Naive thymus-derived CD4-positive, alpha-beta T cell (primary cell): ENCODE measurements at regions of chr17 and their contacts with region 1.

Region 1: GRCh38 chr17:40113110-40113906 is 8.5 kb upstream of the MSL1 start:
- DNase-seq: peak; percentile 69 to 95 (median 93)
- ATAC-seq: peak; percentile 89
- H3K4me3 ChIP-seq: peak overlapping the region; percentile 58
- H3K4me3 Mint-ChIP-seq: peak overlapping the region; percentile 75 to 98 (median 85)
- H3K27ac ChIP-seq: peak overlapping the region; percentile 69
- H3K27ac Mint-ChIP-seq: peak overlapping the region; percentile 57 to 100 (median 91)
- H3K4me1 ChIP-seq: peaks cover 52 to 55% of the 10 kb centered on the region in 2 donors
- H3K4me1 Mint-ChIP-seq: peaks cover 41 to 67% (median 56%) of the 10 kb centered on the region in 7 donors
- H3K27me3 ChIP-seq: no peaks in the 10 kb centered on the region
- H3K27me3 Mint-ChIP-seq: no peaks in the 10 kb centered on the region

Region 2: DNA sequence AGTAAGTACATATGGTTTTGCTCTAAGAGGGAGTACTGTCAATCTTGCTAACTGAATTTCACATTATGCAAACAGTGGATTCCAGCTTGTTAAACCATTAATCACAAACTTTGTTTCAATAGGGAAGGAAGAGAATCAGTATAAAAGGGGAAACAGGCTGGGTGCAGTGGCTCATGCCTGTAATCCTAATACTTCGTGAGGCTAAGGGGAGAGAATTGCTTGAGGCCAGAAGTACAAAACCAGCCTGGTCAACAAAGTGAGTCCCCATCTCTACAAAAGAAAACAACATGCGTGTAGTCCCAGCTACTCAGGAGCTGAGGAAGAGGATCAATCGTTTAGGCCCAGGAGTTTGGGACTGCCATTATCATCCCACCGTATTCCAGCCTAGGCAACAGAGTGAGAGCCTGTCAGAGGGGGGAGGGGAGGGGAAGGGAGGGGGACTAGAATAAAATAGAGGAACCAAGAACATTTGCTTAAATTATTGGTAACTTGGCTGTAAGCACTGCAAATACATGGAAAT is 777.5 kb before region 1 on chr17:
- CTCF ChIA-PET with region 1: no interaction called
- POLR2A ChIA-PET with region 1: no interaction called
- intact Hi-C with region 1: no loop called
- DNase-seq: no peak
- ATAC-seq: peak; percentile 72
- H3K4me3 ChIP-seq: no peak overlapping the region
- H3K4me3 Mint-ChIP-seq: no peak overlapping the region
- H3K27ac ChIP-seq: no peak overlapping the region
- H3K27ac Mint-ChIP-seq: no peak overlapping the region
- H3K4me1 ChIP-seq: no peaks in the 10 kb centered on the region
- H3K4me1 Mint-ChIP-seq: peaks cover 0 to 17% (median 4%) of the 10 kb centered on the region in 7 donors
- H3K27me3 ChIP-seq: no peaks in the 10 kb centered on the region
- H3K27me3 Mint-ChIP-seq: no peaks in the 10 kb centered on the region

Region 3: GRCh38 chr17:40018211-40019121 is 94.8 kb before region 1 on chr17:
- CTCF ChIA-PET with region 1: interaction called, 21 read pairs
- POLR2A ChIA-PET with region 1: no interaction called
- intact Hi-C with region 1: loop called (anchors 1 to 2 kb)
- DNase-seq: no peak
- ATAC-seq: no peak
- H3K4me3 ChIP-seq: no peak overlapping the region
- H3K4me3 Mint-ChIP-seq: no peak overlapping the region
- H3K27ac ChIP-seq: no peak overlapping the region
- H3K27ac Mint-ChIP-seq: peak overlapping the region in 2 of 9 donors; percentile 21 to 25
- H3K4me1 ChIP-seq: no peaks in the 10 kb centered on the region
- H3K4me1 Mint-ChIP-seq: peaks cover 0 to 8% (median 5%) of the 10 kb centered on the region in 7 donors
- H3K27me3 ChIP-seq: no peaks in the 10 kb centered on the region
- H3K27me3 Mint-ChIP-seq: peaks cover 0 to 2% (median 0%) of the 10 kb centered on the region in 5 donors

Region 4: DNA sequence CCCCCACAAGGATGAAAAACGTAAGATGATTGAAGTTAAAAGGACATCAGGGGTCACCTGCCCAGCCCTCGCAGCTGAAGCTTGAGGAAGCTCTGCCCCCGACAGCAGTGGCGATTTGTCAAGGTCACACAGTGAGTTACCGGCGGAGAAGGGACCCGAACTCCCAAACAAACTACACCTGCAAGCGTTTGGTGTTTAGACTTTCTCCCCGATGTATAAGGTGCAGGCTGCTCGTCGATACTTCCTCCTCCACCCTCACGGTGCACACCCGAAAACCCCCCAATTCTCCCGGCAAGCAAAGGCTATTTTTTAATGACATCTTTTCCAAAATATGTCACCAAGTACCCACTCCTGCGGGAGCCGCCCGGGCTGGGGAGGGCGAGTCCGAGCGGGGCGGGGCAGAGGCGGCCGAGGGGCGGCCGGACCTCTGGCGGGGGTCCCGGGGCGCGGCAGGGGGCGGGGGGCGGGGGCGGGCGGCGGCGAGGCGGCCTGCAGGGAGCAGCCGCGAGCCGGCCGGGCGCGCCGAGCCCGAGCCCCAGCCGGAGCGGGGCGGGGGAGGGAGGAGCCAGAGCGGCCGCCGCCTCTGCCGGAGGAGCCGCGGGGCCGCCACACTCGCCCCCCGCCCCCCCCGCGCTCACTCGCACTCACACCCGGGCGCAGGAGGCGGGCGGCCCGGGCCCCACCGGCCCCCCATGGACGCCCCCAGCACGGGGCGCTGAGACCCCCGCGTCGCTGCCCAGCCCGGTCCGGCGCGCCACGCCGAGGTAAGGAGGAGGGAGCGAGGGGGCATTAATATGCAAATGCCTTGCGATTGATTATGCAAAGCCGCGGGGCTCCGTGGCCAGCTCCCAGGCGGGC is 50.8 kb before region 1 on chr17 and contains the start of gene THRA:
- CTCF ChIA-PET with region 1: interaction called, 127 read pairs
- POLR2A ChIA-PET with region 1: interaction called, 60 read pairs
- intact Hi-C with region 1: loop called (anchors 1 to 2 kb)
- DNase-seq: peak; percentile 56 to 77 (median 71)
- ATAC-seq: peak; percentile 93
- H3K4me3 ChIP-seq: peak within 1 kb of the TSS; percentile 81
- H3K4me3 Mint-ChIP-seq: peak within 1 kb of the TSS; percentile 86 to 97 (median 94)
- H3K27ac ChIP-seq: peak within 1 kb of the TSS; percentile 84
- H3K27ac Mint-ChIP-seq: peak within 1 kb of the TSS; percentile 35 to 95 (median 89)
- H3K4me1 ChIP-seq: peaks cover 21 to 34% of the 10 kb centered on the region in 2 donors
- H3K4me1 Mint-ChIP-seq: peaks cover 32 to 50% (median 43%) of the 10 kb centered on the region in 7 donors
- H3K27me3 ChIP-seq: no peaks in the 10 kb centered on the region
- H3K27me3 Mint-ChIP-seq: peaks cover 0 to 62% (median 0%) of the 10 kb centered on the region in 5 donors
- total RNA-seq, gene THRA: 3.2 to 55.9 (median 48.4) TPM

Region 5: GRCh38 chr17:40086150-40087044 is 26.9 kb before region 1 on chr17:
- CTCF ChIA-PET with region 1: interaction called, 53 read pairs
- POLR2A ChIA-PET with region 1: interaction called, 11 read pairs
- intact Hi-C with region 1: loop called in 1 of 2 experiments (anchors 1 kb)
- DNase-seq: peak in 6 of 9 donors; percentile 56 to 69 (median 61)
- ATAC-seq: peak; percentile 76
- H3K4me3 ChIP-seq: no peak overlapping the region
- H3K4me3 Mint-ChIP-seq: peak overlapping the region in 1 of 10 donors; percentile 38
- H3K27ac ChIP-seq: no peak overlapping the region
- H3K27ac Mint-ChIP-seq: peak overlapping the region in 8 of 9 donors; percentile 9 to 70 (median 47)
- H3K4me1 ChIP-seq: peaks cover 0 to 4% of the 10 kb centered on the region in 2 donors
- H3K4me1 Mint-ChIP-seq: peaks cover 4 to 35% (median 21%) of the 10 kb centered on the region in 7 donors
- H3K27me3 ChIP-seq: no peaks in the 10 kb centered on the region
- H3K27me3 Mint-ChIP-seq: no peaks in the 10 kb centered on the region

Region 6: DNA sequence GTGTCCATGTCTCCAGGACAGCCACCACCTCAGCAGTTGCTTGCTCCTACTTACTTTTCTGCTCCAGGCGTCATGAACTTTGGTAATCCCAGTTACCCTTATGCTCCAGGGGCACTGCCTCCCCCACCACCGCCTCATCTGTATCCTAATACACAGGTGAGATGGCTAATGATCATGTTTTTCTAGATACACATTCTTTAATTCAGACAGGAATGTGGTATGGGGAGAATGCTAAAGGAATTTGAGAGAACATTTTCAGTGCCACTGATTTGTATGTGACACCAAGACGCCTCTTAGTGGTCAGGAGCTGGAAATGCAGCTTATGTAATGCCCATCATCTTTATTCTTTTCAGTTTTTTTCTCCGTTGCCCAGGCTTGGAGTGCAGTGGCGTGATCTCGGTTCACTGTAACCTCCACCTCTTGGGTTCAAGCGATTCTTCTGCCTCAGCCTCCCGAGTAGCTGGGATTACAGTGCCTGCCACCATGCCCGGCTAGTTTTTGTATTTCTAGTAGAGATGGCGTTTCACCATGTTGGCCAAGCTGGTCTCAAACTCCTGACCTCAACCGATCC is 55.0 kb after region 1 on chr17:
- CTCF ChIA-PET with region 1: interaction called, 134 read pairs
- POLR2A ChIA-PET with region 1: interaction called, 38 read pairs
- intact Hi-C with region 1: loop called (anchors 1 kb)
- DNase-seq: peak in 7 of 9 donors; percentile 40 to 70 (median 62)
- ATAC-seq: peak; percentile 90
- H3K4me3 ChIP-seq: no peak overlapping the region
- H3K4me3 Mint-ChIP-seq: no peak overlapping the region
- H3K27ac ChIP-seq: peak overlapping the region; percentile 42
- H3K27ac Mint-ChIP-seq: peak overlapping the region; percentile 44 to 93 (median 81)
- H3K4me1 ChIP-seq: no peaks in the 10 kb centered on the region
- H3K4me1 Mint-ChIP-seq: peaks cover 9 to 20% (median 15%) of the 10 kb centered on the region in 7 donors
- H3K27me3 ChIP-seq: no peaks in the 10 kb centered on the region
- H3K27me3 Mint-ChIP-seq: no peaks in the 10 kb centered on the region

Region 7: GRCh38 chr17:40287494-40288369 is 174.4 kb after region 1 on chr17 and contains the start of gene CDC6:
- CTCF ChIA-PET with region 1: no interaction called
- POLR2A ChIA-PET with region 1: no interaction called
- intact Hi-C with region 1: loop called (anchors 1 to 5 kb)
- DNase-seq: peak; percentile 90 to 99 (median 98)
- ATAC-seq: peak; percentile 97
- H3K4me3 ChIP-seq: peak within 1 kb of the TSS; percentile 70
- H3K4me3 Mint-ChIP-seq: peak within 1 kb of the TSS; percentile 93 to 99 (median 96)
- H3K27ac ChIP-seq: peak within 1 kb of the TSS; percentile 63
- H3K27ac Mint-ChIP-seq: peak within 1 kb of the TSS; percentile 84 to 98 (median 91)
- H3K4me1 ChIP-seq: peaks cover 3 to 11% of the 10 kb centered on the region in 2 donors
- H3K4me1 Mint-ChIP-seq: peaks cover 8 to 41% (median 22%) of the 10 kb centered on the region in 7 donors
- H3K27me3 ChIP-seq: no peaks in the 10 kb centered on the region
- H3K27me3 Mint-ChIP-seq: no peaks in the 10 kb centered on the region
- total RNA-seq, gene CDC6: 0.51 to 73.6 (median 0.85) TPM